ENCODE measurements at regions of chrX and their contacts with region 1.

Region 1: DNA sequence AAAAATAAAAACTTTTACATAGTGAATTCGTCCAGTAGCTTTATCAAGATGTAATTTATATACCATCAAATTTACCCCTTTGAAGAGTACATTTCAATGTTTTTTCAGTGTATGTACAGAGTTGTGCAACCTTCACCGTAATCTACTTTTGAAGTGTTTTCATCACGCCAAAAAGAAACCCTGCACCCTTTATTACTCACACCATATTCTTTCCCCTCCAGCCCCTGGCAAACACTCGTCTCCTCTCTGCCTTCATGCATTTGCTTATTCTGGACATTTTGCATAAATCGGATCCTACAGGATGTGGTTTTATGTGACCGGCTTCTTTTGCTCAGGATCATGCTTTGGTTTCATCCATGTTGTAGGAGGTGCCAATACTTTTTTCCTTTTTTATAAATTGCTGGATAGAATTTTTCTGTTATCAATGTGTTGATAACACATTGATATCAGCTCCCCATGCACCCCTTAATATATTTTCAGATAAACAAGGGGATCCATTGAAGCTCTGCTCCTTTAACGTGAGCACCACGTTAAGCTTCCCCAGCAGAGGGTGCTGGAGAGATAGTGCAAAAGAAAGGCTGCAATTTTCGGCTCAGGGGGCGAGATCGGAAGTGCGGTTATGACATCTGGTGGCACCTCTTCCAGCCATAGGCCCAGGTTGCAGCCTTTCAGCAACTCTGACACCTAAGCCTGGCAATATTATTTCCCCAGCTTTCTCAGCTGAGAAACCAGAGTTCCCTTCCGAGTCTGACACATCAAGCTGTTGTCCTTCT is 100.1 kb upstream of the VCX3B start:
- DNase-seq: no peak
- ATAC-seq: no peak
- H3K4me3 ChIP-seq: no peak overlapping the region
- H3K27ac ChIP-seq: no peak overlapping the region
- H3K4me1 ChIP-seq: peaks cover 0 to 10% (median 0%) of the 10 kb centered on the region in 9 donors
- H3K27me3 ChIP-seq: no peaks in the 10 kb centered on the region
- CTCF ChIP-seq: peak in 8 of 9 donors; percentile 18 to 56 (median 42)

Region 2: DNA sequence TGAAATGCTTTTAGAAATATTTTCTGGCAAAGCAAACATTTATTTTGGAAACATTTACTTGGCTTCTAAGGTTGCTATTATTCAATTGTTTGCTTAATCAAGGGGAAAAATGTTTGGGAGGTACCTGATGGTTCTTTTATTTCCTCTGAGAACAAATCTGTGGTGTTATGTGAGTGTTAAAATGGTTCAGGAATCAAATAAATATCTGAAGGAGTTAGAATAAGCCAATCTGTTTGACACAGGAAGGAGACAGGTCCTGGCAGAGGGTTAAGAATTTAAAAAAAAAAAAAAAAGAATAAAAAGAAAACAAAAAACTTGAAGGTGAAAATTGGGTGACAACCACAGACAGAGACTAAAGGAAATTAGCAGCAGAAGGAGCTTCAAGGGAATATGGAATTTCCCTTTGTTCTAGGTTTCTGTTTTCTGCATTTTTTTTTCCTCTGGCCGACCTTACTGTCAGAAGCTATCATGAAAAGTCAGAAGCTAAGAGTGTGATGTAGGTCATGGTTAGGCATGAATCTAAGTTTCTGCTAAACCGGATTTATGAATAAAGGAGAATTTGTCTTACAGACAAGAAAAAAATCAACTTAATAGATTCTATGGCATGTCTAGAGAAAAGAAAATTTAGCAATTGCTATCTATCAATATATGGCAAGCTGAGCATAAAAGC is 358.7 kb before region 1 on chrX:
- intact Hi-C with region 1: loop called in 1 of 10 experiments (anchors 10 kb)
- DNase-seq: no peak
- ATAC-seq: no peak
- H3K4me3 ChIP-seq: no peak overlapping the region
- H3K27ac ChIP-seq: no peak overlapping the region
- H3K4me1 ChIP-seq: peaks cover 0 to 14% (median 0%) of the 10 kb centered on the region in 9 donors
- H3K27me3 ChIP-seq: peaks cover 0 to 4% (median 0%) of the 10 kb centered on the region in 7 donors
- CTCF ChIP-seq: no peak

Region 3: DNA sequence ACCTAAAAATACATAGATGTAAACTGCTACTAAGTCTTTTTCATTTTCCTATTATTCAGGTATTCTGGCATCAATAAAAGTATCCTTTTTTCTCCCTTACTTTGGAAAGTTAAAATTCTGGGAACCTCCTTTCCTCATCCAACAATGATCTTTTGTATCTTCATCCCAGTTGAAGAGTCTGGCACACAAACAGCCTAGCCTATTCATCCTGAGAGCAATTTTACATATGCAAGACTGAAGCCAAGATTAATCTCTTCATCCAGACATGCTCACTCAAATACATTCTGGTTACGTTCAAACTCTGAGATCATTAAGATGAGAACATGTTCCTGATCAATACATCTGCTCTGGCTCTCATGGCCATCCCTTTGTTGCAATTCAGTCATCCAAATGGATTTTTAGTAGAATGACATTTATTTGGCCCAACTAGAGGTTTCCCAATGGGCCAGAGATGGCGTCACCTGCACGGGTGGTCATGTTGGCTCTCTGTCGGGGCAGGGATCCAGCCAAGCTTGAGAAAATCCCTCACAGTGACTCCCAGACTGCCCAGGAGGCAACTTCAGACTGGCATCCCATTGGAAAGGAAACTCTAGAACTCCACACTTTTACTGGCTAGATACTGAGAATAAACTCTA is 58.1 kb before region 1 on chrX:
- intact Hi-C with region 1: no loop called
- DNase-seq: no peak
- ATAC-seq: no peak
- H3K4me3 ChIP-seq: no peak overlapping the region
- H3K27ac ChIP-seq: no peak overlapping the region
- H3K4me1 ChIP-seq: no peaks in the 10 kb centered on the region
- H3K27me3 ChIP-seq: no peaks in the 10 kb centered on the region
- CTCF ChIP-seq: no peak

Region 4: GRCh38 chrX:8548446-8548845 is 183.9 kb after region 1 on chrX:
- intact Hi-C with region 1: no loop called
- DNase-seq: no peak
- ATAC-seq: no peak
- H3K4me3 ChIP-seq: no peak overlapping the region
- H3K27ac ChIP-seq: no peak overlapping the region
- H3K4me1 ChIP-seq: no peaks in the 10 kb centered on the region
- H3K27me3 ChIP-seq: no peaks in the 10 kb centered on the region
- CTCF ChIP-seq: no peak